HEK293T (cell line): ENCODE measurements at regions of chr15 and their contacts with region 1.

Region 1: DNA sequence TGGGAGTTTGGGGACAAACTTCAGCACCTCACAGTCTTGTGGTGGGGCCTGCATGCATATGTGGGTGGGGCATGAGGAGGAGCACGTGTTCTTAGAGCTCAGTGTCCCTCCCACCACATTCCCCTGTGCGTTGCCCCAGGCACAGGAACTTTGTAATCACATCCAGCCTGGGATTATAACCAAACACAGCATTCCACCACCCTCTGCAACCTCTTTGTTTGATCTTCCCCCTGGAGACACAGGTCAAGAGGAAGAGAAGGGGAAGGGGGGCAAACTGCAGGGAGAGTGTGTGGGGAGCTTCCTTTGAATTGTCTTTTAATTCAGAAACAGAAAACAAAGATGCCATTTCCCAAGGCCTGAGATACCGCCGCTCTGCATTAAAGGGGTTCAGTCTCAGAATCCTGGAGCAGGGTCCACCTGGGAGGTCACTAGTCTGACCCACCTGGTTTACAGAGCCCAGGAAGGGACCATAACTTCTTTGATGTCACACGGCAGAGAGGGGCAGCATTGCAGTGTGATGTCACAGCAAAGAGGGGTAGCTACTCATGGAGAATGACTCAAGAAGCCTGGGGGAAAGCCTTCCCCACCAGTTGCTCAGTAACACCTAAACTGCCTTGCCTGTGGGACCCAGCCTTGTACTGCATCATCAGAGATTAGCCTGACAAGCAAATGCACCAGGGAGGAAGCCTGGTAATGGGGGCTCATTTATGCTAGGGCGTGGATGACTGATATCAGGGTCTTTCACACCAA is 106.3 kb upstream of the RNU6-1 start:
- DNase-seq: peak; percentile 49

Region 2: GRCh38 chr15:67884514-67885487 is 61.3 kb before region 1 on chr15:
- CTCF ChIA-PET with region 1: no interaction called
- POLR2A ChIA-PET with region 1: no interaction called
- DNase-seq: peak; percentile 72

Region 3: DNA sequence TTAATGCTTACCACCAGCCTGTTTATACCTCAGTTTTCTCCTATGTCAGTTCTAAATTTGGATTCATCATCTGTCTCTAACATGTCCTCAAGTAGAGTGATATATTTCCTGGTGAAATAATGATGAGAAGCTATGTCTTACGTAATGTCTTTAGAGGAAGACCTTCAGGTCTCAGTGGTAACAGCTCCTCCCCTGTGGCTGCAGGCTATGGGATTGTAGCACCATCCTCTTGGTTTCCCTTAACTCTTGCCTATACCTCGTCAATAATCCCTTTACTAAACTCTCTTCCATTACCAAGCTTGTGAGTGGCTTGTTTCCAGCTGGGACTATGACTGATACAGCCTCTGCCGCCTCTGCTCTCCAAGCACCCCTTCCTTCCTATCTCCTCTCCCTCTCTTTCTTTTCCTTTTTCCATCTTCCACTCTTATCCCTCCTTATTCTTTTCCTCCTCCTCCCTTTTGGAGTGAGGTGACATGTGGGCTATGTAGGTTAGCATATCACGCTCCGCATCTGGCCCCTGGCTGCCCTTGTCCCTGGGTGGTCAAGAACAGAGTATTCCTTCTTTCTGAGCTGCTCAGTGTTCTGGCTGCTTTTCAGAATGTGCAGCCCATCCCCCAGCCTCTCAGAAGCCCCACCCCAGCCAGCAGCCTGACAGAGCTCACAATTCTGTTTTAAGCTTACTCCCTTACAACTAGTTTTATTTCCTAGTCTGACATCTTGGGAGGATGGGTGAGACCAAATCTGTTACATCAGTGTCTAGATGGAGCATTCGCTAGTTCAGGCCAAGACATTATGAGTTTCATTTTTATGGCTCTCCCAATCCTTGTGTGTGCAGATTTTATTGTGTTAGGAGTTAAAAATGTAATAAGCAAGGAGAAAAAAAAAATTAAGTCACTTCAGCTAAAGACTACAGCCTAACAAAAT is 31.3 kb before region 1 on chr15:
- CTCF ChIA-PET with region 1: no interaction called
- POLR2A ChIA-PET with region 1: interaction called, 13 read pairs
- DNase-seq: no peak